ENCODE measurements at regions of chr12 and their contacts with region 1.

Region 1: GRCh38 chr12:30806989-30807694 is 52.4 kb upstream of the CAPRIN2 start:
- DNase-seq: peak; percentile 30 to 77 (median 44)
- ATAC-seq: peak; percentile 98
- H3K4me3 ChIP-seq: peak overlapping the region; percentile 11; the same call in 1 of the 2 replicates
- H3K27ac ChIP-seq: no peak overlapping the region
- H3K4me1 ChIP-seq: peaks cover 0 to 3% of the 10 kb centered on the region in 2 experiments; a peak in 2 of 5 replicates
- H3K27me3 ChIP-seq: peaks cover 0 to 3% of the 10 kb centered on the region in 2 experiments; a peak in 1 of 5 replicates
- CTCF ChIP-seq: peak; percentile 51 to 84 (median 72)
- EP300 ChIP-seq: no peak
- POLR2A ChIP-seq: no peak
- RAD21 ChIP-seq: peak; percentile 94 to 95

Region 2: DNA sequence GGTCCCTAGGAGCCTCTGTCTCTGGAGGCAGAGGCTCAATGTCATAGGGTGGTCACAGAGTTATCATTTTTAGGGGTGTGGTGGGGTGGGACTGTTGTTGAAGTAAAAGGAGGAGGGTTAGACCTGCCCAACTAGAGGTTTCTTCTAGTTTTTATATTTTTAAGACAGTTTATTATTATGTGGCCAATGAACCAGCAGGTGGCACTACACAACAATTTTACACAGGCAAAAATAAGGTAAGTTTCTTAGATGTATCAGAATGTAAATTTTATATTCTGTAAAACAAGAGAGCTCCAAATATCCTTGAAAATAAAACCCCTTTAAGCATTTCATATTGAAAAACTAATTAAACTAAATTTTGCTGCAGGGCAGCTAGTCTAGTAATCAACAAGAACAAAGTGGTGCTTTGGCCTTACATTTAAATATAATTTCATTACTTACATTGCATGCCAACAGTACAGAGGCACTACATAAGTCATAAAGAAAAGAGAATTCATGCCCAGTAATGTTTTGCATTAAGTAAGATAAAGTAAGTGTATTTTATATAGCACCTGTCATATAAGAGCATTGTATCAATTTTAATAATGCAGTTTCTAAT is 1287.5 kb before region 1 on chr12:
- CTCF ChIA-PET with region 1: interaction called, 36 read pairs
- POLR2A ChIA-PET with region 1: no interaction called
- in situ Hi-C with region 1: loop called (anchors 10 kb)
- intact Hi-C with region 1: loop called (anchors 1 kb)
- DNase-seq: peak; percentile 23 to 49 (median 26)
- ATAC-seq: peak; percentile 44; the same call in 2 of the 3 replicates
- H3K4me3 ChIP-seq: no peak overlapping the region
- H3K27ac ChIP-seq: no peak overlapping the region
- H3K4me1 ChIP-seq: no peaks in the 10 kb centered on the region; a peak in 1 of 5 replicates
- H3K27me3 ChIP-seq: peaks cover 0 to 4% of the 10 kb centered on the region in 2 experiments; a peak in 1 of 5 replicates
- CTCF ChIP-seq: peak; percentile 26 to 73 (median 42); a peak in 3 of 6 replicates
- EP300 ChIP-seq: no peak
- POLR2A ChIP-seq: no peak
- RAD21 ChIP-seq: peak; percentile 64 to 79

Region 3: GRCh38 chr12:30197392-30198047 is 609.6 kb before region 1 on chr12:
- CTCF ChIA-PET with region 1: no interaction called
- POLR2A ChIA-PET with region 1: no interaction called
- in situ Hi-C with region 1: loop called (anchors 25 kb)
- intact Hi-C with region 1: no loop called
- DNase-seq: no peak
- ATAC-seq: no peak
- H3K4me3 ChIP-seq: no peak overlapping the region
- H3K27ac ChIP-seq: no peak overlapping the region
- H3K4me1 ChIP-seq: no peaks in the 10 kb centered on the region; a peak in 1 of 5 replicates
- H3K27me3 ChIP-seq: peaks cover 0 to 12% of the 10 kb centered on the region in 2 experiments; a peak in 3 of 5 replicates
- CTCF ChIP-seq: no peak
- EP300 ChIP-seq: no peak
- POLR2A ChIP-seq: no peak
- RAD21 ChIP-seq: no peak

Region 4: GRCh38 chr12:30695199-30696103 is 111.7 kb before region 1 on chr12 and contains the start of gene IPO8:
- CTCF ChIA-PET with region 1: no interaction called
- POLR2A ChIA-PET with region 1: no interaction called
- in situ Hi-C with region 1: no loop called
- intact Hi-C with region 1: loop called (anchors 10 kb)
- DNase-seq: peak; percentile 94 to 96 (median 94)
- ATAC-seq: peak; percentile 90
- H3K4me3 ChIP-seq: peak within 1 kb of the TSS; percentile 78
- H3K27ac ChIP-seq: peak within 1 kb of the TSS; percentile 86
- H3K4me1 ChIP-seq: peaks cover 11 to 13% of the 10 kb centered on the region in 2 experiments; a peak in 4 of 5 replicates
- H3K27me3 ChIP-seq: no peaks in the 10 kb centered on the region
- CTCF ChIP-seq: peak; percentile 9 to 39 (median 25); a peak in 3 of 6 replicates
- EP300 ChIP-seq: no peak; the same call in 1 of the 2 replicates
- POLR2A ChIP-seq: peak; percentile 76
- RAD21 ChIP-seq: no peak
- polyA plus RNA-seq, gene IPO8: 6.5 to 10.9 TPM

Region 5: GRCh38 chr12:30914986-30915591 is 107.9 kb after region 1 on chr12:
- CTCF ChIA-PET with region 1: no interaction called
- POLR2A ChIA-PET with region 1: no interaction called
- in situ Hi-C with region 1: no loop called
- intact Hi-C with region 1: no loop called
- DNase-seq: no peak
- ATAC-seq: no peak
- H3K4me3 ChIP-seq: no peak overlapping the region
- H3K27ac ChIP-seq: no peak overlapping the region
- H3K4me1 ChIP-seq: no peaks in the 10 kb centered on the region
- H3K27me3 ChIP-seq: peaks cover 0 to 5% of the 10 kb centered on the region in 2 experiments; a peak in 2 of 5 replicates
- CTCF ChIP-seq: no peak
- EP300 ChIP-seq: no peak
- POLR2A ChIP-seq: no peak
- RAD21 ChIP-seq: no peak